Right lobe of liver (tissue), 6 donors: ENCODE measurements at regions of chr1 and their contacts with region 1.

Region 1: GRCh38 chr1:154669464-154670282 is 61.7 kb upstream of the ADAR start:
- DNase-seq: peak; percentile 74 to 79 (median 79)
- ATAC-seq: peak; percentile 99 to 100 (median 100)
- H3K4me3 ChIP-seq: no peak overlapping the region
- H3K27ac ChIP-seq: no peak overlapping the region
- H3K4me1 ChIP-seq: no peaks in the 10 kb centered on the region
- H3K27me3 ChIP-seq: no peaks in the 10 kb centered on the region
- CTCF ChIP-seq: peak; percentile 76 to 86 (median 83)
- POLR2A ChIP-seq: no peak

Region 2: GRCh38 chr1:154483941-154484803 is 185.5 kb before region 1 on chr1:
- intact Hi-C with region 1: no loop called
- DNase-seq: no peak
- ATAC-seq: peak in 2 of 4 donors; percentile 9 to 53
- H3K4me3 ChIP-seq: no peak overlapping the region
- H3K27ac ChIP-seq: no peak overlapping the region
- H3K4me1 ChIP-seq: peaks cover 0 to 20% (median 5%) of the 10 kb centered on the region in 4 donors
- H3K27me3 ChIP-seq: no peaks in the 10 kb centered on the region
- CTCF ChIP-seq: no peak
- POLR2A ChIP-seq: no peak

Region 3: DNA sequence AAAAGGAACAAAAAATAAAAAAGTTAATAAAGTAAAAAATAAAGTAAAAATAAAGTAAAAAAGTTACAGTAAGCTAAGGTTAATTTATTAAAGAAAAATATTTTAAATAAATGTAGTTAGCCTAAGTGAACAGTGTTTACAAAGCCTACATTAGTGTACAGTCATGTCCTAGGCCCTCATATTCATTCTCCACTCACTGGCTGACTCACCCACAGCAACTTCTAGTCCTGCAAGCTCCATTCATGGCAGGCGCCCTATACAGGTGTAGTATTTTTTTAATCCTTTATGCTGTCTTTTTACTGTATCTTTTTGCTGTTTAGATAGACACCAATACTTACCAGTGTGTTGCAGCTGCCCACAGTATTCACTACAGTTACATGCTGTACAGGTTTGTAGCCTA is 74.1 kb before region 1 on chr1:
- intact Hi-C with region 1: no loop called
- DNase-seq: no peak
- ATAC-seq: no peak
- H3K4me3 ChIP-seq: no peak overlapping the region
- H3K27ac ChIP-seq: no peak overlapping the region
- H3K4me1 ChIP-seq: no peaks in the 10 kb centered on the region
- H3K27me3 ChIP-seq: no peaks in the 10 kb centered on the region
- CTCF ChIP-seq: no peak
- POLR2A ChIP-seq: no peak

Region 4: GRCh38 chr1:154607609-154608396 is 61.9 kb before region 1 on chr1 and contains the start of gene ADAR:
- intact Hi-C with region 1: no loop called
- DNase-seq: peak; percentile 91 to 96 (median 95)
- ATAC-seq: peak; percentile 92 to 94 (median 93)
- H3K4me3 ChIP-seq: peak within 1 kb of the TSS; percentile 71 to 97 (median 77)
- H3K27ac ChIP-seq: peak within 1 kb of the TSS; percentile 93 to 96 (median 95)
- H3K4me1 ChIP-seq: peaks cover 0 to 37% (median 13%) of the 10 kb centered on the region in 4 donors
- H3K27me3 ChIP-seq: no peaks in the 10 kb centered on the region
- CTCF ChIP-seq: no peak
- POLR2A ChIP-seq: peak; percentile 23
- total RNA-seq, gene ADAR: 69.9 to 105 (median 78.7) TPM

Region 5: GRCh38 chr1:154751690-154752089 is 82.0 kb after region 1 on chr1:
- intact Hi-C with region 1: loop called (anchors 10 kb)
- DNase-seq: peak in 1 of 3 donors; percentile 33
- ATAC-seq: peak in 2 of 4 donors; percentile 72 to 83
- H3K4me3 ChIP-seq: no peak overlapping the region
- H3K27ac ChIP-seq: no peak overlapping the region
- H3K4me1 ChIP-seq: no peaks in the 10 kb centered on the region
- H3K27me3 ChIP-seq: no peaks in the 10 kb centered on the region
- CTCF ChIP-seq: no peak
- POLR2A ChIP-seq: no peak

Region 6: DNA sequence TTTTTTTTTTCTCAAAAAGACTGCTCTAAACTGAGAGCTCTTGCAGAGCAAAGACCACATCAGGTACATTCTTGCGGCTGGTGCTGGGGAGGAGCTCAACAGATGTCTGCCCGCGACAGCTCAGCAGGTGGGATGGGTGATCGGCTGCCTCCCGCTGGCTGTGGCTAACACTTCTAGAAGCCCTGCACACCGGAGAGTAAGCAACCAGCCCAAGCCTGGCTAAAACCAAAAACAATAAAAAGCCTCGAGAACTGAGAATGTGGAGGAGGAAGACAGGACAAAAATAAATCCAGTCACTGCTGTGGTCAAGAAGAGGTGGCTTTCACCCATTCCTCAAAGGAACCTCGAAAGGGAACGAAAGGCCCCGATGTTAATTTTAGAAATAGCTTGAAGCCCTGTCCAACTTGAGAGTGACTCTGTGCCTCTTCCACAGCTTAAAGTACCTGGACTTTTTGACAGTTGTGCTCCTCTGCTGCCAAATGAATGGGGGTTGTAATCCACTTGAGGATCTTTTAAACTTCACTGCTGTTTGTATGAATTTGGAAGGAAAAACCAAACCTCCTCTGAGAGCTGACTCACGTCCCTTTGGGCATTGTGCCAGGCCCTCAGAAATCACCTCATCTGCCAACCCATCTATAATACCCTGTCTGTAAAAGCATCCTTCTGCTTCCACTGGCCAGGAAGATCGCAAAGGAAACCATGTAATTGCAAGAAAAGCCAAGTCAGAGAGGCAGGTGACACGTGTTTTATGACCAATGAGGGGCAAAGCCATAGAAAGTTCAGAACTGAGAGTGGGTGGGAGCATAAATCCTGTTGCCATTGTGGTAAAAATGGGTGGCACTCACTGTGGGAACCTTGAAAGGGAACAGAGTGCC is 121.9 kb after region 1 on chr1:
- intact Hi-C with region 1: no loop called
- DNase-seq: peak in 1 of 3 donors; percentile 29
- ATAC-seq: peak in 3 of 4 donors; percentile 15 to 47 (median 46)
- H3K4me3 ChIP-seq: no peak overlapping the region
- H3K27ac ChIP-seq: no peak overlapping the region
- H3K4me1 ChIP-seq: no peaks in the 10 kb centered on the region
- H3K27me3 ChIP-seq: no peaks in the 10 kb centered on the region
- CTCF ChIP-seq: no peak
- POLR2A ChIP-seq: no peak

Region 7: DNA sequence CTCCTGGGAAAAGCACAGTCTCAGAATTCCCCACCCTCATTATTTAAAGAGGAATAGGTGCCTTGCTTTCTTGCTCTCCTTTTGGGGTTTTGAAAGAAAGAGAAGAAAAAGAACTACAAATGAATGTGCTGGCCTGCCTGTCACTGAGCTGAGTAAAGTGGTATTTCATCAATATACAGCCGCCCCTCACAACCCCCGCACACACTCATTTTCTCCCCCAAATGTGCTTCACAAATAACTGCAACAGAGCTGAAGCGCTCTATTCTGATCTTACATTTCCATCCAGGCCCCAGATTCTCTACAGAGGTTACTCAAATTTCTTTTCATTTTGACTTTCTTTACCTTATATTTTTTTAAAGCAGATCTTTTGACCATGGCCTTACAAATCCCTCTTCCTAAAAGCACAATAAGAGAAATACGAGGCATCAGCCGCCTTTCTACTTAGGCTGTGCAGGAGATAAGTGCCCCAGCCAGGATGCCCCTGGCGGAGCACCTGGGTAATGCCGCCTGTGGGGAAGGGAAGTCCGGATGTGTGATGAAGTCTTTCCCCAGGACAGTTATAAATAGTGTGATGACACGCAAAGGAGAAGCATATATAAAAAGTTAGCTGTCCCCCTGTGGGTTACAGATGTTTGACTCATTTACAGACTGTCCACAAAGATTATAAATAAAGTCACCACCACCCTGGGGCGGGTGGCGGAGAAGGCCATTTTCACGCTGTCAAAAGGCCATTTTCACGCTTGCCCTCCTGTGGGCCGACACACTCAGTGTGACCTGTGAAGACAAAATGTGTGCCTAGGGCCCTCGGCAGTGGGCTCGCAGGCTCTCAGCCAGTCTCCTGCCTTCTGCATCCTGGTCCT is 193.9 kb after region 1 on chr1:
- intact Hi-C with region 1: loop called in 1 of 2 experiments (anchors 10 kb)
- DNase-seq: no peak
- ATAC-seq: peak in 1 of 4 donors; percentile 41
- H3K4me3 ChIP-seq: no peak overlapping the region
- H3K27ac ChIP-seq: no peak overlapping the region
- H3K4me1 ChIP-seq: peaks cover 0 to 4% (median 0%) of the 10 kb centered on the region in 4 donors
- H3K27me3 ChIP-seq: no peaks in the 10 kb centered on the region
- CTCF ChIP-seq: peak in 3 of 4 donors; percentile 15 to 28 (median 22)
- POLR2A ChIP-seq: no peak

Region 8: DNA sequence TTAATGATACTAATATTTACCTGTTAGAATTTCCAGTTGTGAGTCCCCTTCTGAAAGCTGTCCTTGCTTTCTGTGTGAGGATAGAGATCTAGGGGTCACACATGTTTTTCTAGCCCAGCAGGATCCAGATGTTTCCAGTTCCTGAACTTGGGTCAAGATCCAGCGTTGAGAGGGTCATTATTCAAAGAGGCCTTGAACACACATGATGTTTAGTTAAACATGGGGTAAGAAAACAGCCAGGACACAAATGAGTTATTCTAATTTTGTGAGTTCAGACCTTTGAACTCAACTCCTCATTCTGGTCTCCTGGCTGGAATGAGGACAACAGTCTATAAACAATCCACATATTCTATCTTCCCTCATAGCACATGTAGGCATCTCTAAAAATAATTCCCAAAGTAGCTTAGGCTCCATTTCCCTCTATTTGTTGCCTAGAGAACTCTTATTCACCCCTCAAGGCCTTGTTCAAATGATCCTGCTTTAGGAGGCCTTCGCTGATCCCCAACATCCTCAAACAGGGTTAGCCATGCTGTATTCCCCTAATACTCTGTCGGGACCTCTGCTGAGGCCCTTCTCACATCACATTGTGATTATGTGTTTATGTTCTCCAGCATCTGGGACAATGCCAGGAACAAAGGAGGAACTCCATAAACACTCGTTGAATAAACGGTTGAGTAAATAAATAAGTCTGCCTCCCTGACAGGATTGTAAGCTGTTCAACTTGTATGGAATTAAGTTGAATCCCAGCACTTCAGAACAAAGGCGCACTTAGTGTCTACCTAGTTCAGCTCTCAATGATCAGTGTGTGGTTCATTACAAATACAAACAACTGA is 215.4 kb after region 1 on chr1:
- intact Hi-C with region 1: loop called in 1 of 2 experiments (anchors 5 kb)
- DNase-seq: no peak
- ATAC-seq: peak in 2 of 4 donors; percentile 22 to 38
- H3K4me3 ChIP-seq: no peak overlapping the region
- H3K27ac ChIP-seq: no peak overlapping the region
- H3K4me1 ChIP-seq: no peaks in the 10 kb centered on the region
- H3K27me3 ChIP-seq: no peaks in the 10 kb centered on the region
- CTCF ChIP-seq: no peak
- POLR2A ChIP-seq: no peak